Activated CD4-positive, alpha-beta T cell treated with anti-CD3 and anti-CD28 coated beads for 36 hours (primary cell): ENCODE measurements at regions of chr7 and their contacts with region 1.

Region 1: GRCh38 chr7:94395141-94396036 is 694 bp downstream of the COL1A2 start:
- DNase-seq: peak; percentile 41
- ATAC-seq: peak; percentile 80
- H3K4me3 Mint-ChIP-seq: no peak overlapping the region
- H3K27ac Mint-ChIP-seq: no peak overlapping the region
- H3K4me1 Mint-ChIP-seq: peaks cover 8% of the 10 kb centered on the region
- H3K27me3 Mint-ChIP-seq: peaks cover 23% of the 10 kb centered on the region

Region 2: DNA sequence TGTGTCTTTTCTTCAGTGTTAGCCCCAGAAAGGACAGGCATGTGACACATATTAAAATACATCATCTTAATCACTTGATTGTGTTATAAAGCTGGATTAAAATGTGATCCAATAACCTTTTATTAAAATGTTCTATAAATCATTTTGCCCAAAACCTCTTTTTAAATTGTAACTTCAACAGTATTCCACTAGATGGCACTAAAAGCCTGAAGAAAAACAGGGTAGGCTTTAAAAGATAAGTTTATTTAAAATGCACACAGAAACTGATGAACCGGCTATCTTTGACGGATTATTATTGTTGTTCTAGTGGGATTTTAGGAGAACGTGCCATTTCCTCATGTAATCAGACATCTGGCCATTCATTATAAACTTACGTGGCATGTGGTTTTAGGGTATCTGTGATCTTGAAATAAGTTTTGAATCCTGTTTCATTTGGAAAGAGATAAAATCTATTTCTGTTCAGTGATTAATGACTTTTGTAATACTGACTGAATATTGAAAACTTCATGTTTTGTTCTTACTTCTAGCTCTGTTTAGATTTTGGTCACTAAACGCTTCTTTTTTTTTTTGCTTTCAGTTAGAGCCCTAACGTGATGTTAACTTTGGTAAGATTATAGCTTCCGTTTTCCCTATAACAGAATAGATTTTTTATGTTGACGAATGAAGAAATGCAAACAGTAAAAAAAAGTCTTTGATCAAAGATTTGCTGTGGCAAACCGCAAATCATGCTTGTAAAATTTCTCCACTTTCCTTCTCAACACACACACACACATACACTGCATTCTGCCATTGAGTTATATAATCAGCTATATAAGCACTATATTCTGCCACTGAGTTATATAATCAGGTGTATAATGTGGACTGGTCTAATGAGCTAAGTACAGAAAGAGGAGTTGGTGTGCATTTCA is 1149.6 kb before region 1 on chr7:
- CTCF ChIA-PET with region 1: no interaction called
- POLR2A ChIA-PET with region 1: no interaction called
- intact Hi-C with region 1: loop called (anchors 5 to 10 kb)
- DNase-seq: no peak
- ATAC-seq: no peak
- H3K4me3 Mint-ChIP-seq: no peak overlapping the region
- H3K27ac Mint-ChIP-seq: no peak overlapping the region
- H3K4me1 Mint-ChIP-seq: peaks cover 11% of the 10 kb centered on the region
- H3K27me3 Mint-ChIP-seq: no peaks in the 10 kb centered on the region

Region 3: DNA sequence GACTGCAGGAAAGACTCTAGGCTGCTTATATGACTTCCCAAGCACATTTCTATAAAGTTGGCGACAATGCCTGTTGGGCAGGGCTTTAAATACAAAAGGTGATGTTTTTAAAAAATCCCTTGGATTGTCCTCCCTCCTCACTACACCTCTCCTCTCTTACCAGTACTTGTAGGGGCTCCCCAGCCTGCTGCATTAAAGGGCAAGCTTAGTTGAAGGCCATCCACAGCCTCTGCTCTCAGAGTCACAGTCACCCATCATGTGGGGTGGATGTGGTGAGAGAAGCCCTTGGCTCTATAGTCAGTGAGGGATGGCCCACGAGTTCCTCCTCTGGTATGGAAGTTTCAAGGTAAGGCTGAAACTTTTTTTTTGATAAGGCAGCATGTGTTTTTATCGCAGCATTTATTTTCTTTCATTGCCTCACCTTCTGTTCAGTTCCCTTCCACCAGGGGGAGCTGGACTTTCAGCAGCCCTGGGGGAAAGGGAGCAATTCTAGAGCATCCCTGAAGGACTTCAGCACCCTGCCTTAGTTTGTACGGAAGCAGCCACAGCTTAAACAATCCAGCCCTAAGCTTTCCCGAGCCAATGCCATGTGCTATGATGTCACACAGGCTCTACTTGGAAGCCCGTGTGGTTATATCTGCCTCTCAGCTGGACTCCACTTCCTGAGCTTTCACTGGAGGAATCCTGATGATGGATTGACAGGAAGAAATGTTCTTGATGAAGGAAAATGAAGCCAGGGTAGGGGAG is 952.7 kb before region 1 on chr7:
- CTCF ChIA-PET with region 1: interaction called, 3 read pairs
- POLR2A ChIA-PET with region 1: no interaction called
- intact Hi-C with region 1: loop called (anchors 2 to 10 kb)
- DNase-seq: peak; percentile 62
- ATAC-seq: peak; percentile 58
- H3K4me3 Mint-ChIP-seq: no peak overlapping the region
- H3K27ac Mint-ChIP-seq: no peak overlapping the region
- H3K4me1 Mint-ChIP-seq: no peaks in the 10 kb centered on the region
- H3K27me3 Mint-ChIP-seq: no peaks in the 10 kb centered on the region

Region 4: DNA sequence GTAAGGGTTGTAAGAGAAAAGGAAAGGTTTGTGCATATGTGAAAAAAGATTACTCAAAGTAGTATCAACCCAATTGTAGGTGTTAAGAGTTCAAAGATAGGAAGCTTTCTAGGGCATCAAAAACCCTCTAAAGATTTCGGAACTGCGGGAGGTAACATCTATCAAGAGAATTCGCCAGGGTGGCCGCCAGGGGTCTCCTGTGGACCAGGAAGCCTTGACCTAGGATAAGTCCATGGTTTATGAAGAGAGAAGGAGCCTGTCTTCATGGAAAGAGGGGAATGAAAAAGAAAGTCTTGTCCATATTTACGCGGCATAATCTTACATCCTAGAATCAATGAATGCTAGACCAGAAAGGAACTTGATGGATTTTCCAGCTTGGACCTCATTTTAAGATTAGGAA is 680.2 kb before region 1 on chr7:
- CTCF ChIA-PET with region 1: no interaction called
- POLR2A ChIA-PET with region 1: no interaction called
- intact Hi-C with region 1: loop called (anchors 2 to 10 kb)
- DNase-seq: peak; percentile 60
- ATAC-seq: no peak
- H3K4me3 Mint-ChIP-seq: no peak overlapping the region
- H3K27ac Mint-ChIP-seq: no peak overlapping the region
- H3K4me1 Mint-ChIP-seq: no peaks in the 10 kb centered on the region
- H3K27me3 Mint-ChIP-seq: peaks cover 8% of the 10 kb centered on the region

Region 5: GRCh38 chr7:93799750-93800357 is 595.5 kb before region 1 on chr7:
- CTCF ChIA-PET with region 1: interaction called, 3 read pairs
- POLR2A ChIA-PET with region 1: no interaction called
- intact Hi-C with region 1: loop called in 1 of 2 experiments (anchors 1 kb)
- DNase-seq: no peak
- ATAC-seq: no peak
- H3K4me3 Mint-ChIP-seq: no peak overlapping the region
- H3K27ac Mint-ChIP-seq: no peak overlapping the region
- H3K4me1 Mint-ChIP-seq: no peaks in the 10 kb centered on the region
- H3K27me3 Mint-ChIP-seq: peaks cover 2% of the 10 kb centered on the region

Region 6: DNA sequence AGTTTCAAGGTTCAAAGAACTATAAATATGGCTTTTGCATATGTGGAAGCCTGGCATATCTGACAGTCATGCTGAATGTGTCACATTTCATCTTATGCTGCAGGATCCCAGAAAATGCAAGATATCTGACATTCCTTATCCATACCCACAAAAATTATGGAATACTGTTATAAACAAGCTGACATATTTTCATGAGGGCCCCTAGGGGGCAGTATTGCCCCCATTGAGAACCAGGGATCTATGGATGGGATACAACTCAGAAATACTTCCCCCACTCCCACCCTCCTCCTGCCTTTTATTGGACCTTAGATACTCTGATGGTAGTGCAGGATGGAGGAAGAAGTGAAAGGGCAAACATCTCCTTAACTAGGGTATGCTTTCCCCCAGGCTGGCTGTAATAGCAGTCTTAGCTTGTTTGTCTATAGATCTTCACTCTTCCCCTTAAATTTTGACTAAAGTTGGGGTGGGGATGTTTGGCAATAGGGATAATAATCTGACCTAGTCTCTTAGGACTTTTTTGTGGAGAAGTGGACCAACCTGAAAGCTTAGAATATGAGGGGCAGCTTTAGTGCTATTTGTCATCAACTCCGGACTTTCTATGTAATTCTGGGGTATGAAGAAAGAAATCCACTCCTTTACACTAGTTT is 492.5 kb before region 1 on chr7:
- CTCF ChIA-PET with region 1: no interaction called
- POLR2A ChIA-PET with region 1: no interaction called
- intact Hi-C with region 1: loop called (anchors 1 to 5 kb)
- DNase-seq: peak; percentile 25
- ATAC-seq: no peak
- H3K4me3 Mint-ChIP-seq: no peak overlapping the region
- H3K27ac Mint-ChIP-seq: no peak overlapping the region
- H3K4me1 Mint-ChIP-seq: no peaks in the 10 kb centered on the region
- H3K27me3 Mint-ChIP-seq: peaks cover 11% of the 10 kb centered on the region

Region 7: GRCh38 chr7:94289071-94289470 is 106.3 kb before region 1 on chr7:
- CTCF ChIA-PET with region 1: no interaction called
- POLR2A ChIA-PET with region 1: no interaction called
- intact Hi-C with region 1: loop called in 1 of 2 experiments (anchors 5 kb)
- DNase-seq: no peak
- ATAC-seq: no peak
- H3K4me3 Mint-ChIP-seq: no peak overlapping the region
- H3K27ac Mint-ChIP-seq: no peak overlapping the region
- H3K4me1 Mint-ChIP-seq: no peaks in the 10 kb centered on the region
- H3K27me3 Mint-ChIP-seq: peaks cover 10% of the 10 kb centered on the region